ENCODE measurements at regions of chr6 and their contacts with region 1.

Region 1: DNA sequence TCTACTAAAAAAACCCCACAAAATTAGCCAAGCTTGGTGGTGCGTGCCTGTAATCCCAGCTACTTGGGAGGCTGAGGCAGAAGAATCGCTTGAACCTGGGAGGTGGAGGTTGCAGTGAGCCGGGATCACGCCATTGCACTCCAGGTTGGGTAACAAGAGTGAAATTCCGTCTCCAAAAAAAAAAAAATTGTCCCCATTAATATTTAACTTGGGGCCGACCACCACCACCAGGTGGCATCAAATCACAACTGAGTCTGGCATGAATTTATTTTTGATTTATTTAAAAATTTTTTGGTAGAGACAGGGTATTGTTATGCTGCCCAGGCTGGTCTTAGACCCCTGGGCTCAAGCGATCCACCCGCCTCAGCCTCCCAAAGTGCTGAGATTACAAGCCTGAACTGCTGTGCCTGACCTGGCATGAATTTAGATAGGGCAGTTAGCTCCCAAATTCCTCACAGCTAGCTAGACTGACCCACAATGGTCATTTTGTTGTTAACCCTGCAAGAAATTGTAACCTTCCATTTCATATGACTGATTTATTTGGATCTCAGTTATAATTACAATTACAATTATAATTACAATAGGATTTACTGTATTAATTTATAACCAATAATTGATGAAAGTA is 17.1 kb upstream of the BEND3 start:
- DNase-seq: no peak
- ATAC-seq: no peak

Region 2: GRCh38 chr6:106599440-106599839 is 533.0 kb before region 1 on chr6:
- intact Hi-C with region 1: loop called (anchors 5 kb)
- DNase-seq: no peak
- ATAC-seq: no peak